CD14-positive monocyte (primary cell): ENCODE measurements at regions of chr3 and their contacts with region 1.

Region 1: GRCh38 chr3:87478716-87479115 is 202.3 kb upstream of the POU1F1 start:
- DNase-seq: no peak
- H3K4me3 ChIP-seq: no peak overlapping the region
- H3K4me3 Mint-ChIP-seq: no peak overlapping the region
- H3K27ac ChIP-seq: no peak overlapping the region
- H3K27ac Mint-ChIP-seq: no peak overlapping the region
- H3K4me1 ChIP-seq: no peaks in the 10 kb centered on the region
- H3K4me1 Mint-ChIP-seq: no peaks in the 10 kb centered on the region
- H3K27me3 ChIP-seq: no peaks in the 10 kb centered on the region
- H3K27me3 Mint-ChIP-seq: peaks cover 0 to 2% (median 0%) of the 10 kb centered on the region in 3 donors
- CTCF ChIP-seq: no peak

Region 2: DNA sequence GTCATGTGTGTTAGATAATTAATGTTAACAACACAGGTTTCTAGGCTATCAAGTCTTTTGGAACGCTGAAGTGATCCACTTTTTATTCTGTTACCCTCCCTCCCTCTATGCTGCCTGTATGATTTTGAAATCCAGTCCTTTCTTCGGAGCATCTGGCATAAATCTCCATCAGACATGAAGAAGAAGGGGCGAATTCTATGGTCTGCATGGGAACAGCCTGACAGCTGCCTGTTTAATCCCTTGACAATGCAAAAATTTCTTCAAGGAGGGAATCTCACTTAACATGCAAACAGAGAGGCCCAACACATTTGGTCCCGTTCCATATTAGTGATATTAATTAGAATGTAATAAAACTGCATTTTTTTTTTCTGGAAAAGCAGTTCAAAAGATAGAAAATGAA is 633.0 kb before region 1 on chr3:
- intact Hi-C with region 1: no loop called
- DNase-seq: no peak
- H3K4me3 ChIP-seq: no peak overlapping the region
- H3K4me3 Mint-ChIP-seq: no peak overlapping the region
- H3K27ac ChIP-seq: no peak overlapping the region
- H3K27ac Mint-ChIP-seq: no peak overlapping the region
- H3K4me1 ChIP-seq: no peaks in the 10 kb centered on the region
- H3K4me1 Mint-ChIP-seq: no peaks in the 10 kb centered on the region
- H3K27me3 ChIP-seq: no peaks in the 10 kb centered on the region
- H3K27me3 Mint-ChIP-seq: no peaks in the 10 kb centered on the region
- CTCF ChIP-seq: no peak

Region 3: DNA sequence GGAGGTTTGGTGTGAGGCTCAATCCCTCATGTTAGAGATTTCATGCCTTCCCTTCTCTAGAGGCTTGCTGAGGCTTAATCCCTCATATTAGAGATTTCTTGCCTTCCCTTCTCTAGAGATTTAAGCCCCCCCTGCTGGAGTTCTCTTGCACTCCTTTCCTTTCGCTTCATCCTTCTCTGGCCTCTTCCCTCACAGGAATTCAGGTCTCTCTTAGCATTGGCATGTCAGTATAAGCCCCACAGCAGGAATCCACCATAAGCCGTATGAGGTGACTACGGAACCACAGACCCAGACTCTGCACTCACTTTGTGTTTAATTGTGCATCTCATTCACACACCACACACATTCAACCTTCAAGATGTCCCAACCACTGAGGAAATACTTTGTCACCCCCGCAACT is 136.3 kb after region 1 on chr3:
- intact Hi-C with region 1: loop called in 1 of 2 experiments (anchors 10 kb)
- DNase-seq: no peak
- H3K4me3 ChIP-seq: no peak overlapping the region
- H3K4me3 Mint-ChIP-seq: no peak overlapping the region
- H3K27ac ChIP-seq: no peak overlapping the region
- H3K27ac Mint-ChIP-seq: no peak overlapping the region
- H3K4me1 ChIP-seq: no peaks in the 10 kb centered on the region
- H3K4me1 Mint-ChIP-seq: no peaks in the 10 kb centered on the region
- H3K27me3 ChIP-seq: no peaks in the 10 kb centered on the region
- H3K27me3 Mint-ChIP-seq: peaks cover 0 to 1% (median 0%) of the 10 kb centered on the region in 3 donors
- CTCF ChIP-seq: no peak